ENCODE measurements at regions of chr12 and their contacts with region 1.

Region 1: GRCh38 chr12:19181666-19182426 is 52.3 kb downstream of the PLEKHA5 start:
- DNase-seq: no peak

Region 2: GRCh38 chr12:19129486-19130223 is 52.2 kb before region 1 on chr12 and contains the start of gene PLEKHA5:
- intact Hi-C with region 1: loop called (anchors 2 kb)
- DNase-seq: peak; percentile 84
- total RNA-seq, gene PLEKHA5: 65.4 TPM

Measured in cardiac septum (tissue), 1 donor.